Caco-2 (cell line): ENCODE measurements at regions of chr3 and their contacts with region 1.

Region 1: GRCh38 chr3:52752045-52752660 is 18.6 kb downstream of the NEK4 start:
- DNase-seq: peak; percentile 41 to 63
- H3K4me3 ChIP-seq: no peak overlapping the region
- H3K4me3 Mint-ChIP-seq: no peak overlapping the region
- H3K27ac Mint-ChIP-seq: no peak overlapping the region
- H3K4me1 ChIP-seq: peaks cover 9% of the 10 kb centered on the region; the same call in 1 of the 2 replicates
- H3K4me1 Mint-ChIP-seq: no peaks in the 10 kb centered on the region
- H3K27me3 ChIP-seq: no peaks in the 10 kb centered on the region
- H3K27me3 Mint-ChIP-seq: no peaks in the 10 kb centered on the region
- CTCF ChIP-seq: no peak

Region 2: GRCh38 chr3:52730681-52731080 is 21.5 kb before region 1 on chr3:
- CTCF ChIA-PET with region 1: no interaction called
- POLR2A ChIA-PET with region 1: no interaction called
- intact Hi-C with region 1: loop called (anchors 2 kb)
- DNase-seq: no peak
- H3K4me3 ChIP-seq: no peak overlapping the region
- H3K4me3 Mint-ChIP-seq: no peak overlapping the region
- H3K27ac Mint-ChIP-seq: no peak overlapping the region
- H3K4me1 ChIP-seq: 0 out of 2 replicates have a peak, but pooled peaks cover 3% of the 10 kb centered on the region
- H3K4me1 Mint-ChIP-seq: no peaks in the 10 kb centered on the region
- H3K27me3 ChIP-seq: no peaks in the 10 kb centered on the region
- H3K27me3 Mint-ChIP-seq: no peaks in the 10 kb centered on the region
- CTCF ChIP-seq: no peak

Region 3: DNA sequence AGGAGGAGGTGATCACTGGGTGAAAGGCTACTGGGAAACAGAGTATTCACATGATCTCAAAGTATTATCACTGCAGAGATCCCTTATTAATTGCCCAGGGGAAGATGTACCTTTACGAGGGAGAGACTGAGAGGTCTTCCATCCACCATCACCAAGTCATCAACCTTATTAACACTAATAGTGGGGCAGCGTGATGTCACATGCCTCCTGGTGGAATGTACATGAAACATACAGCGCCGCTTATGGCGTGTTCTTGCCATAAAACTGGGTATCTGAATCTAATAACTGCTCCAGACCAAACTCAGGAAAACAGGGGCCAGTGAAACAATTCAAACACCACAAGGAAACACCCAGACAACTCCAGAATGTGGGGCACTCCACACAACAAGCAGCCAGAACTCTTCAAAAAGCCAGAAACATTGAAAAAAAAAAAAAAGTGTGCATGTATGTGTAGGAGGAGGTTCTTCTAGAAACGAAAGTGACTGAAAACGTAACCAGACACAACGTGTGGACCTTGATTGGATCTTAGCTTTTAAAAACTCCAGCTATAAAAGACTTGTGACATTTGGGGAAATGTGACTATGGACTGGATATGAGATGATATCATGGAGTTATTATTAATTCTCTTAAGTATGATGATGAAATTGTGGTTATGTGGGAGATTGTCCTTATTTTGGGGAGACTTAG is 140.6 kb after region 1 on chr3:
- CTCF ChIA-PET with region 1: no interaction called
- POLR2A ChIA-PET with region 1: no interaction called
- intact Hi-C with region 1: no loop called
- DNase-seq: no peak
- H3K4me3 ChIP-seq: no peak overlapping the region
- H3K4me3 Mint-ChIP-seq: no peak overlapping the region
- H3K27ac Mint-ChIP-seq: no peak overlapping the region
- H3K4me1 ChIP-seq: 0 out of 2 replicates have a peak, but pooled peaks cover 4% of the 10 kb centered on the region
- H3K4me1 Mint-ChIP-seq: peaks cover 15% of the 10 kb centered on the region
- H3K27me3 ChIP-seq: no peaks in the 10 kb centered on the region
- H3K27me3 Mint-ChIP-seq: no peaks in the 10 kb centered on the region
- CTCF ChIP-seq: no peak

Region 4: DNA sequence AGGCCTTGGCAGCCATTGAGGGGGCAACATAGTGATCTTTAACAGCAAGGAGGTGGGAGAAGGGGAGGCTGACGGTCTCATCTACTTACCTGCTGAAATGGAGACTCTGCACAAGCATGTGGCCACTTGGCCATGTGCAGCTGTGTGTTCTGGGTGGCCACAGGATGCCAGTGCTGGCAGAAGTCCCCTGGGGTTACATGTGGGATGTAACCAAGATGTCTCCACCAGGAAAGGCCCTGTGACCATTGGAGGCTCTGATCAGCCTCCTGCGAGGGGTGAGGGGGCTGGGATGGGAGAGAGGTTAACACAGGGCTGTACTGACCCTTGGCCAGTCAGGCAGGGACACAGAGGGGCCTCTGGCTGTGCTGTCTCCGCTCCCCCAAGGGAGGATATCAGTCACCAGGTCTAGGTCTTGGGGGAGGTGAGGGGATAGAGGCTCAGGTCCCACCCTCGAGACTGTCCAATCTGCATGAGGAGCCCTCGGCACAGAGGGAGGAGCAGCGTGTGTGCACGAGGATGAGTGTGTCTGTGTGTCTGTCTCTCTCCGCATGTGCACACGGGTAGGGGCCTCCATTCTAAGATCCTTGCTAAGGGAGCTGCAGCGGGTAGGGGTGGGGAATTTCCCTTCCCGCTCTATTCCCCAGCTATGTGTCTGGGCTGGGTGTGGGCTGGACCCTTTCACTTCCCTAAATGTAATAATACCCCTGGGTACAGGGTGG is 428.3 kb after region 1 on chr3:
- CTCF ChIA-PET with region 1: no interaction called
- POLR2A ChIA-PET with region 1: no interaction called
- intact Hi-C with region 1: no loop called
- DNase-seq: no peak
- H3K4me3 ChIP-seq: no peak overlapping the region
- H3K4me3 Mint-ChIP-seq: no peak overlapping the region
- H3K27ac Mint-ChIP-seq: no peak overlapping the region
- H3K4me1 ChIP-seq: no peaks in the 10 kb centered on the region
- H3K4me1 Mint-ChIP-seq: no peaks in the 10 kb centered on the region
- H3K27me3 ChIP-seq: no peaks in the 10 kb centered on the region
- H3K27me3 Mint-ChIP-seq: no peaks in the 10 kb centered on the region
- CTCF ChIP-seq: no peak